Colonic mucosa (tissue), 4 donors: ENCODE measurements at regions of chr6 and their contacts with region 1.

Region 1: GRCh38 chr6:43769526-43770416 is at the start of gene VEGFA:
- DNase-seq: peak; percentile 95
- H3K4me3 ChIP-seq: peak within 1 kb of the TSS; percentile 80
- H3K27ac ChIP-seq: peak within 1 kb of the TSS; percentile 98
- H3K4me1 ChIP-seq: peaks cover 11% of the 10 kb centered on the region
- H3K27me3 ChIP-seq: no peaks in the 10 kb centered on the region
- CTCF ChIP-seq: peak; percentile 94
- total RNA-seq, gene VEGFA: 113 to 216 TPM

Region 2: DNA sequence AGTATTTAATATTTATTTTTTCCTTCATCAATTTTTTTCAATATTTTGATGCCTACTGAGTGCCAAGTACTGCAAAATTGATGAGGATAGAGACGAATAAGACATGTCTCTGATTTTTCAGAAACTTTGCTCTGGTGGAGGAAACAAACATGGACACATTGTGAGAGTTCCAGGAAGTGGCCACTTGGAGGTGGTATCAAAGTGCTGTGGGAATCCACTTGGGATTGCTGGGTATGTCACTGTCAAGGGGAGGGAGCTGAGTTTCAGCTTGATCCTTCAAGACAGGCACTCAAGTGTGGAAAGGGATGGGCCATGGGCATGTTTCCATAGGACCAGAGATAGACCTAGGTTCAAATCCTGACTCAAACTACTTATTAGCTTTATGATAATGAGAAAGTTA is 367.0 kb before region 1 on chr6:
- intact Hi-C with region 1: no loop called
- DNase-seq: no peak
- H3K4me3 ChIP-seq: no peak overlapping the region
- H3K27ac ChIP-seq: no peak overlapping the region
- H3K4me1 ChIP-seq: no peaks in the 10 kb centered on the region
- H3K27me3 ChIP-seq: no peaks in the 10 kb centered on the region
- CTCF ChIP-seq: no peak

Region 3: DNA sequence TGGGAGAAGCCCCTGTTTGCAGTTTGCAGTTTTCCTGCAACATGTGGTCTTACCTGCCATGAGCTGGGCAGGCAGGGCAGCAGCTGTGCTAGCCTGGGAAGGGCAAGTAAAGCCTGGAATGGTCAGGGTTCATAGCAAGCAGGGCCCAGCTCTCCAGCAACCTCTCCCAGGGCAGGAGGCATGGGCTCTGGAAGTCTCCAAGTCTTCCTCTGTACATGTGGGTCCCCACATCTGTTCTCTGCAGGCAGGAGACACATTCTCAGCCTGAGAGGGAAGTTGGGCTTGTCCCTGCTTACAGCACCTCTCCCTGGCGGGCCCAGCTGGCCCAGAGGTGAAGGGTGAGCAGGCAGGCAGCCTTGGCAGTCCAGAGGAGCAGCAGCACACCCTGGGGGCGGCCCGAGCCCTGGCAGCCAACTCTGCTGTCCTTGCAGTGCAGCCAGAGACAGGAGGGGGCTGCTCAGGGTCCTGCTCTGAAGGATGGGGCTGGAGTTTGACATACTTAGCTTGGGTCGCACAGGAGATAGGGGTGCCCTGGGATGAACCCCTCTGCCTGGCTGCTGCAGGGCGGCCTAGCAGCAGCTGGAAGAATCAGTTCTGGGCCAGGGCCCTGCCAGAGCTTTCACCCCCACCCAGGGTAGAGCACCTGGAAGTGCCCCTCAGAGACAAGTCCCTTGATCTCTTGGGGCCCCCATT is 181.4 kb after region 1 on chr6:
- intact Hi-C with region 1: loop called (anchors 2 kb)
- DNase-seq: peak; percentile 75
- H3K4me3 ChIP-seq: no peak overlapping the region
- H3K27ac ChIP-seq: no peak overlapping the region
- H3K4me1 ChIP-seq: no peaks in the 10 kb centered on the region
- H3K27me3 ChIP-seq: no peaks in the 10 kb centered on the region
- CTCF ChIP-seq: peak; percentile 51

Region 4: DNA sequence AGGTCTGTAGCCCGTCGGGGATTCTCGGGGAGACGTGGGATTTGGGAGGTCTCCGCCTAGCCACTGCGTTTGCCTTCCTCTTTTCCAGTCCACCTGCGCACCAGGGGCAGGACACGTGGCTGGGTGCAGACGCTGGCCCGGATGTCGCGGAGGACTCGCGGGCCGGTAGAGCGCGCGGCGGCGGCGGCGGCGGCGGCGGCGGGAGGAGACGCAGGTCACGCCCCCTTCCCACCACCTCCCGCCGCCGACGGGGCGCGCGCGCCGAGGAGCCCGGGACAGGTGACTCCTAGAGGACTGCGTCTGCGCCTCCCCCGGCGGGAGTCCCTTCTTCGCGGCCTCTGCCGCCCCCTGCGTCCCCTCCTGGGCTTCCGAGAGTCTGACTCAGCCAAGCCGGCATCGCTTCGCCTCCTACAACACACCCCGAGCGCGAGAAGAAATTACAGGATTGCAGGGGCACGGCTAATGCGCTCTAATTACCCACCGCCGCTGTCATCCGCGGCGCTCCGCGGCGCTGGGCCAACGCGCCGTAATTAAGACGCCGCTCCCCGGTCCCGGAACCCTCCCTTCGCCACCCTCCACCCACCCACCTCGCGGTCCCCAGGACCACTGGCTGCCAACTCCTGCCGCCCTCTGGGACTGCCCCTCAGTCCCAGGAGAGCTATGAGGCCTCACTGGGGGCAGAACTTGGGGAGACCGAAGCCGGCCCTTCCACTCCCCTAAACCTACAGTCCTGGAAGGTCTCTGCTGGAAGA is 233.0 kb after region 1 on chr6:
- intact Hi-C with region 1: loop called (anchors 5 kb)
- DNase-seq: peak; percentile 75
- H3K4me3 ChIP-seq: peak overlapping the region; percentile 28
- H3K27ac ChIP-seq: no peak overlapping the region
- H3K4me1 ChIP-seq: peaks cover 4% of the 10 kb centered on the region
- H3K27me3 ChIP-seq: no peaks in the 10 kb centered on the region
- CTCF ChIP-seq: no peak

Region 5: DNA sequence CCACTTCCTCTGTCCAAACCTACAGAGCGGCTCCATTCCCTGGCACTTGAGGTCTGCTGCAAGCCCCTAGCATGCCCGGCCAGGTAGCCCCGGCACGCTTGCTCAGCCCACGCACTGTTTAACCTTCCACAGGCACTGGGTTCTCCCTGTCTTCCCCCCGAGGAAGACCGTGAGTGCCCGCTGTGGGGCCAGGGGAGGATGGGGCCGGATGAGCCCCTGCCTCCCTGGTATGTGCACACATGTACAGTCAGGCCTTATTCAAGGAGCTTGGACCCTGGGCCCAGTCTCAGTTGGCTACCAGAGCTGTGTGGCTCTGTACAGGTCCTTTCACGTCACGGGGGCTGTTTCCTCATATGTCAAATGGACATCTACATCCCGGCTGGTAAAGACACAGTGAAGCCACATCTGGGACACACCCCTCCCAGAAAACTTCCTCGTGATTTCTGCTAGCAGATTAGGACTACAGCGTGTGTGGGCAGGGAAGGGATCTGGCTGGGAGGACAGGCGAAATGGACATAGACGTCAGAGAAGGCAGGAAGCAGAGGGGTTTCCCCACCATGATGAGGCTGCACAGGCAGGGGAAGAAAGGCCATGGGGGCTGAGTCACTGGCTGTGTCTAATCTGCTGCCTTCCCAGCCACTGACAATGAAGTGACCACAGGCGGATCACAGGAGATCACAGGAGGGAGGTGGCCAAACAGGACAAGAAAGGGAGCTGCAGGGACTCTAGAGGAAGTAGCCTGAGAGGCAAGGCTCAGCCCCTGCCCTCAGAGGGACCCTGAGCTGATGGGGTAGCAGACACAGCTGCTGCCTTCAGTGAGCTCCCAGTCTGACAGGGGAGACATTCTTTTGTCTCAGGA is 294.5 kb after region 1 on chr6:
- intact Hi-C with region 1: no loop called
- DNase-seq: no peak
- H3K4me3 ChIP-seq: no peak overlapping the region
- H3K27ac ChIP-seq: peak overlapping the region; percentile 50
- H3K4me1 ChIP-seq: no peaks in the 10 kb centered on the region
- H3K27me3 ChIP-seq: no peaks in the 10 kb centered on the region
- CTCF ChIP-seq: no peak

Region 6: GRCh38 chr6:44078795-44079671 is 309.3 kb after region 1 on chr6:
- intact Hi-C with region 1: loop called (anchors 2 kb)
- DNase-seq: peak; percentile 89
- H3K4me3 ChIP-seq: no peak overlapping the region
- H3K27ac ChIP-seq: no peak overlapping the region
- H3K4me1 ChIP-seq: peaks cover 15% of the 10 kb centered on the region
- H3K27me3 ChIP-seq: no peaks in the 10 kb centered on the region
- CTCF ChIP-seq: peak; percentile 87

Region 7: GRCh38 chr6:44151348-44152108 is 381.8 kb after region 1 on chr6:
- intact Hi-C with region 1: no loop called
- DNase-seq: peak; percentile 77
- H3K4me3 ChIP-seq: no peak overlapping the region
- H3K27ac ChIP-seq: no peak overlapping the region
- H3K4me1 ChIP-seq: no peaks in the 10 kb centered on the region
- H3K27me3 ChIP-seq: no peaks in the 10 kb centered on the region
- CTCF ChIP-seq: peak; percentile 99